Panc1 (cell line): ENCODE measurements at regions of chr16 and their contacts with region 1.

Region 1: DNA sequence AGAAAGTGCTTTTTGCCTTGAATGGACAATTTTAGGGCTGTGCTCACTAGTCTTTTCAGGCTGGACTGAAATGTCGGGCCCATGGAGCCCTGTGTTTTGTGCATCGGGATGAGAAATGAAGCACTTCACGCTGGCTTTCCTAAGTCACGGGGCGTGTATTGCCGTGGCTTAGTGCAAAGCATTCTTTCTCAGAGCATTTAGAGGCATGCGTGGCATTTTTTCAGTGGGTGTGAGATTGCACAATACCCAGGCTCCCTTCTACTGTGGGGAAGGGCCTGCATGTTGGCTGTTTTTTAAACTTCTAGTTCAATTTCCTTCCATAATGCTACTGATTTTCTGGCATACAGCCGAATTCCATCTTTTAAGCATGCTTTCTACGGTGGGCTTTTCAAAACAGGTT is 12.6 kb upstream of the POLR3E start:
- DNase-seq: no peak
- ATAC-seq: no peak
- H3K4me3 ChIP-seq: no peak overlapping the region
- H3K27ac ChIP-seq: no peak overlapping the region
- H3K4me1 ChIP-seq: no peaks in the 10 kb centered on the region
- H3K27me3 ChIP-seq: no peaks in the 10 kb centered on the region
- CTCF ChIP-seq: no peak

Region 2: DNA sequence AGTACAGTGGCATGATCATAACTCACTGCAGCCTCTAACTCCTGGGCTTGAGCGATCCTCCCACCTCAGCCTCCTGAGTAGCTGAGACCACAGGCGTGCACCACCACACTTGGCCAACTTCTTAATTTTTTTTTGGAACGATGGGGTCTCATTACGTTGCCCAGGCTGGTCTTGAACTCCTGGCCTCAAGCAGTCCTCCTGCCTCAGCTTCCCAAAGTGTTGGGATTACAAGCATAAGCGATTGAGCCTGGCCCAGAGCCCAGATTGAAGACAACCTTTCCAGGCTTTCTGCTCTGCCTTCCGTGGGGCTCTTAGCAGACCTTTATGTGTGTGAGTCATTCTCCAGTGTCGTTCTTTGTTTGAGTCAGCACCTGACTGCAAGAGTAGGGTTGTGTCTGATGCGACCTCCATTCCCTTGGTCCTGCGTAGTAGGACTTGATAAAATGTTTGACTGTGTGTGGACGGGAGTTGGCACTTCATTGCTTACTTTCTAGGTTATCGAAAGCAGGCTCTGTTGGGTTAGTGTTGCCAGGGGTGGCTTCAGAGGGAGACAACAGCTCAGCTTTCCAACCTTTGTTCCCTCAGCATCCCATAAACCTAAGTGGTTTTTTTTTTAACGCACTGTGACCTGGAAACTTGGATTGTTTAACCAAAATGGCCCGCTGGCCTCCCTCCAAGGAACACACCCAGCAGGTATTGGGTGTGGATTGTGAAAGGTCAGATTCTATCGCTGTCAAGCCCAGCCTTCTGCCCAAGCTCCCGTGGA is 52.2 kb before region 1 on chr16:
- CTCF ChIA-PET with region 1: no interaction called
- POLR2A ChIA-PET with region 1: interaction called, 14 read pairs
- in situ Hi-C with region 1: no loop called
- intact Hi-C with region 1: no loop called
- DNase-seq: peak; percentile 15
- ATAC-seq: peak; percentile 95
- H3K4me3 ChIP-seq: peak overlapping the region in 1 of 2 experiments; percentile 43; a peak in 2 of 4 replicates
- H3K27ac ChIP-seq: peak overlapping the region; percentile 60; the same call in 1 of the 2 replicates
- H3K4me1 ChIP-seq: peaks cover 8% of the 10 kb centered on the region; the same call in 1 of the 2 replicates
- H3K27me3 ChIP-seq: no peaks in the 10 kb centered on the region
- CTCF ChIP-seq: no peak

Region 3: DNA sequence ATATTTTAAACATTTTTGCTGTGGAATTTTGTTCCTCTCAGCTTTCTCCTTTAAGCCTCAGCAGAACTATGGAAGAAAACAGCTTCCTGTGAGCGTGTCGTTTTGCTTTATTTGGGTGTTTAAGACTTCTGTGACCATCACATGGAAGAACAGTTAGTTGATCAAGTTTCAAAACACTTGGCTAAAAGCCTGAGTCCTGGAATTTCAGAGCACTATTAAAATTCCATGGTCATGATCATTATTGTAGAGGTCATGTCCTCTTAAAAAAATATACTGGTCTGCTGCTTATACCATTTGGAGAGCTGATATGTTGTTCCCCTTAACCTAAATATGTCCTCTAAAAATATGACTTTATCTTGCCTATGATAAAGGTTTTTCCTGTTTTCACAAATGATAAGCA is 102.3 kb after region 1 on chr16:
- CTCF ChIA-PET with region 1: no interaction called
- POLR2A ChIA-PET with region 1: no interaction called
- in situ Hi-C with region 1: no loop called
- intact Hi-C with region 1: no loop called
- DNase-seq: no peak
- ATAC-seq: peak; percentile 80
- H3K4me3 ChIP-seq: no peak overlapping the region
- H3K27ac ChIP-seq: peak overlapping the region; percentile 25; the same call in 1 of the 2 replicates
- H3K4me1 ChIP-seq: peaks cover 10% of the 10 kb centered on the region; the same call in 1 of the 2 replicates
- H3K27me3 ChIP-seq: no peaks in the 10 kb centered on the region
- CTCF ChIP-seq: no peak

Region 4: GRCh38 chr16:22397464-22397863 is 112.8 kb after region 1 on chr16:
- CTCF ChIA-PET with region 1: no interaction called
- POLR2A ChIA-PET with region 1: interaction called, 10 read pairs
- in situ Hi-C with region 1: no loop called
- intact Hi-C with region 1: no loop called
- DNase-seq: no peak
- ATAC-seq: no peak
- H3K4me3 ChIP-seq: no peak overlapping the region
- H3K27ac ChIP-seq: no peak overlapping the region
- H3K4me1 ChIP-seq: no peaks in the 10 kb centered on the region
- H3K27me3 ChIP-seq: no peaks in the 10 kb centered on the region
- CTCF ChIP-seq: no peak